Naive thymus-derived CD8-positive, alpha-beta T cell (primary cell): ENCODE measurements at regions of chr11 and their contacts with region 1.

Region 1: DNA sequence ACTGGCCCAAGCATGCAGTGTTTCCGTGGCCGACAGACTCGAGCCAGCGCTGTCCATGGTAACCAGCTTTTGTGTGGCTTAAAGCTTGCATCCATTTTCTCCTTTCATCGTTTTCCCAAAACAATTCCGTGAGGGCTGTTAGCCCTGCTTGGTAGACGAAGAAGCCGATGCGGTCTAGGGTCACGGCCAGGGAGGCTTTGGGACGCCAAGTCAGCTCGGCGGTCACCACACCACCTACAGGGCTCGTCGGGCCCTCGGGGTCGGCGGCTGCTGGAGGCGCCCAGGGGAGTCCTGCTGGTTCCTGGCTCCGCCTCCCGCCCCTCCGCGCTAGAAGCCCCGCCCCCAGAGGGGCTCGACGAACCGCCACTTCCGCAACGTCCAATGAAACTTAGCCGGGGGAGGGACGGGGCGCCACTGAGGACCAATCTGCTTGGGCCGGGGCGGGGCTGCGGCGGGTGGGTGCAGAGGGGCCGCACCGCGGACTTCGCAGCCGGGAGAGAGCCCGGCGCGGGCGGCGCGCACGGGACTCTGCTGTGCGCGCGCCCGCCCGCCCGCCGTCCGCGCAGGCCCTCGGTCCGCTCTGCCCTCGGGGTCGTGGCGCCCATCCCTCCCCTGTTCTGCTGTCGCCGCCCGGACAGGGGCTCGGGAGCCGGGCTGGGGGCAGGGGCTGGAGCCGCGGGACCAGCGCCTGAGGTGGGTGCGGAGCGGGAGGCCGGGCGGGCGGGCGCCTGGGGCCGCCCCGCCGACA is at the start of gene TIGD3:
- DNase-seq: peak; percentile 94 to 99 (median 96)
- ATAC-seq: peak; percentile 95 to 96
- H3K4me3 Mint-ChIP-seq: peak within 1 kb of the TSS; percentile 84 to 96 (median 93)
- H3K27ac Mint-ChIP-seq: peak within 1 kb of the TSS; percentile 67 to 96 (median 86)
- H3K4me1 Mint-ChIP-seq: peaks cover 12 to 20% (median 17%) of the 10 kb centered on the region in 4 donors
- H3K27me3 Mint-ChIP-seq: no peaks in the 10 kb centered on the region
- polyA plus RNA-seq, gene TIGD3: 0.15 to 0.67 (median 0.21) TPM

Region 2: DNA sequence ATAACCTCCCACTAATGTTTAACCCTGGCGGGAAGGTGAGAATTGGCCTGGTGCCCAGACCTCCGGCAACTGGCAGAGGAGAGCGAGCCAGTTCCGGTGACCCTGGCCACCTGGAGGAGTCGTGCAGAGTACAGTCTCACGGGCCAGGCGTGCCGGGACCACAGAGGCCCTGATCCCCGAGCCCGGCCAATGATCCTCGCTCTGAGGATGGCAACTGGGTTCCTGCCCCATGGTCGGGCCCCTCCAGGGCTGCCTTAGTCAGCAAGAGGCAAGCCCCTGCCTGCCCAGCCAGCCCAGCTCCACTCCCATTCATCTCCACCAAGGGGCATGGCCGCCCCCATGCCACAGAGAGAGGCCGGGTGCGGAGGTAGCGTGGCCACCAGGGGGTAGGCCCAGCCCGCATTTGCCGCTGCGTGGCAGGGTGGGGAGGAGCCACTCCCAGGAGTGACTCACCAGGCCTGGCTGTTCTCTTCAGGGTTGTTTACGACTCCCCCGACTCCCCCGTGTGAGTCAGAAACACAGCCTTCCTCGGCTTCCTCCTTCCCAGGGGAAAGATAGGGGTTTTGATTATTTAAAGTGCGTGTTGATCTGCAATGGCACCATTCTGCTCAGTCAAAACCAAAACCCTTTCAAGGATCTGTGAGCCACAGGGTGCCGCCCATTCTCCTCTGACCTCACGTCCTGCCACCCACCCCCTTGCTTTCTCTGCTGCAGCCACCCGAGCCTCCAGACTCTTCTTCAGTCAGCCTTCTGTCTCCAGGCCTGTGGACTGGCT is 27.8 kb after region 1 on chr11 and contains the start of gene SLC25A45:
- POLR2A ChIA-PET with region 1: interaction called, 11 read pairs
- DNase-seq: peak; percentile 84 to 96 (median 91)
- ATAC-seq: peak; percentile 86 to 88
- H3K4me3 Mint-ChIP-seq: peak within 1 kb of the TSS; percentile 80 to 97 (median 92)
- H3K27ac Mint-ChIP-seq: peak within 1 kb of the TSS; percentile 96 to 100 (median 99)
- H3K4me1 Mint-ChIP-seq: peaks cover 34 to 72% (median 57%) of the 10 kb centered on the region in 4 donors
- H3K27me3 Mint-ChIP-seq: no peaks in the 10 kb centered on the region
- polyA plus RNA-seq, gene SLC25A45: 10.8 to 19.2 (median 11.0) TPM